ENCODE measurements at regions of chr2 and their contacts with region 1.

Region 1: GRCh38 chr2:234451852-234452625 is 44.8 kb downstream of the ARL4C start:
- DNase-seq: no peak
- H3K4me3 Mint-ChIP-seq: peak overlapping the region; percentile 85
- H3K27ac Mint-ChIP-seq: peak overlapping the region; percentile 93
- H3K4me1 Mint-ChIP-seq: peaks cover 84% of the 10 kb centered on the region
- H3K27me3 Mint-ChIP-seq: peaks cover 2% of the 10 kb centered on the region

Region 2: DNA sequence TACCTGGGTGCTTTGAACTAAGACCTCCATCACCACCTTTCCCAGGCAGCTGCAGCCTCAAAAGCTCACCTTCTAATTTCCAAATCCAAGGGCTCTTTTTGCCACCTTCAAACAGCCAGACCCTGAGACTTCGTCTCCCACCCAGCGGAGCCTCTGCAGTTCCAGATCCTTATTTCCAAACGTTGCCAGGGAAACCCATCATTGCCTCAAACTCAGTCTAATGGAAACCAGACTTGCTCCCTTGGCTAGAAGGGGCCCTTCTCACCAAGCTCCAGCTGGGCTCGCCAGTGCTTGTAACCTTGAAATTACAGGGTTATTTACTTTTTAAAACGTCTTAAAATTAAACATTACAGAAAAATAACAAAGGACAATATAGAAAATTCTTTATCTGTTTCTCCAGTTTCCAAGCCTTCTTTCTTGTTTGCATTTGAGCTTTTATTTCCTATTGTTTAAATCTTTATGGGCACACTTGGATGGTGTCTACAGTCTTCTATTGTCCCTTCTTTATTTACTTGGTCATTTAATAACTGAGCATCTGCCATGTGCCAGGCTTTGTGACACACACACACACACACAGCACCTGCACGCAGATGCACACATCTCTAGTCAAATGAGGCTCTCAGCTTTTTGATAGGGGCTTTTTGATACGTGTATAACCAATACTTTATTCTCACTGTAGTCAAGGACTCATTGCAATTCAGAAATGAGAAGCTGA is 498.8 kb before region 1 on chr2:
- CTCF ChIA-PET with region 1: no interaction called
- POLR2A ChIA-PET with region 1: no interaction called
- DNase-seq: no peak
- H3K4me3 Mint-ChIP-seq: no peak overlapping the region
- H3K27ac Mint-ChIP-seq: no peak overlapping the region
- H3K4me1 Mint-ChIP-seq: no peaks in the 10 kb centered on the region
- H3K27me3 Mint-ChIP-seq: peaks cover 35% of the 10 kb centered on the region

Region 3: DNA sequence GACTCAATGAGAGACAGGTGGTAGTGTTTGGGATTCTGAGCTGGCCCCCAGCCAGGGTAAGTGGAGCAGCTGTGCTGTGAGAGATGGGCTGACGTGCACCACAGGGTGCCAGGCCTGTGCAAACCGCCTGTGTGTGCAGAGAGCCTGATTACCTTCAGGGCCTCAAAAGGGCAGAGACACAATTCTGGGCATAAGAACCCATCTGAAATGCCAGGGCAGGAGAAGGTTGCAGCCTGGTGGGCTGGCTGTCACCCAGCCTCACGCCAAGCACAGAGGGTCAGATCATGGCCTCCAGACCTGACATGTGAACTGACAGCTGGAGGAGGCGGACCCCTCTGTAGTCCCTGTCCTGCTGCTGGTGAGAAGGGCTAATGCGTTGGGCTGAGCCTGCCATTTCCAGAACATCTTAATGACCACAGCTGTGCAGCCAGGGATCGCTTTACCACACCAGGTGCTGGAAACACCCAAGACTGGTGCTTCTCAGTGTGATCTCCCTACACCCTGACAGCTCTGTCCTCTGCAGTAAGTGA is 56.1 kb before region 1 on chr2:
- CTCF ChIA-PET with region 1: no interaction called
- POLR2A ChIA-PET with region 1: no interaction called
- DNase-seq: no peak
- H3K4me3 Mint-ChIP-seq: no peak overlapping the region
- H3K27ac Mint-ChIP-seq: no peak overlapping the region
- H3K4me1 Mint-ChIP-seq: peaks cover 78% of the 10 kb centered on the region
- H3K27me3 Mint-ChIP-seq: no peaks in the 10 kb centered on the region

Region 4: GRCh38 chr2:234425619-234426603 is 26.1 kb before region 1 on chr2:
- CTCF ChIA-PET with region 1: interaction called, 5 read pairs
- POLR2A ChIA-PET with region 1: interaction called, 10 read pairs
- DNase-seq: peak; percentile 92
- H3K4me3 Mint-ChIP-seq: peak overlapping the region; percentile 58
- H3K27ac Mint-ChIP-seq: peak overlapping the region; percentile 99
- H3K4me1 Mint-ChIP-seq: peaks cover 98% of the 10 kb centered on the region
- H3K27me3 Mint-ChIP-seq: no peaks in the 10 kb centered on the region

Region 5: GRCh38 chr2:234463626-234464290 is 11.7 kb after region 1 on chr2:
- CTCF ChIA-PET with region 1: interaction called, 49 read pairs
- POLR2A ChIA-PET with region 1: interaction called, 4 read pairs
- DNase-seq: peak; percentile 83
- H3K4me3 Mint-ChIP-seq: peak overlapping the region; percentile 66
- H3K27ac Mint-ChIP-seq: peak overlapping the region; percentile 95
- H3K4me1 Mint-ChIP-seq: peaks cover 66% of the 10 kb centered on the region
- H3K27me3 Mint-ChIP-seq: no peaks in the 10 kb centered on the region

Region 6: GRCh38 chr2:234483568-234484251 is 31.7 kb after region 1 on chr2:
- CTCF ChIA-PET with region 1: interaction called, 8 read pairs
- POLR2A ChIA-PET with region 1: interaction called, 23 read pairs
- DNase-seq: peak; percentile 90
- H3K4me3 Mint-ChIP-seq: peak overlapping the region; percentile 52
- H3K27ac Mint-ChIP-seq: peak overlapping the region; percentile 89
- H3K4me1 Mint-ChIP-seq: peaks cover 93% of the 10 kb centered on the region
- H3K27me3 Mint-ChIP-seq: no peaks in the 10 kb centered on the region

Region 7: DNA sequence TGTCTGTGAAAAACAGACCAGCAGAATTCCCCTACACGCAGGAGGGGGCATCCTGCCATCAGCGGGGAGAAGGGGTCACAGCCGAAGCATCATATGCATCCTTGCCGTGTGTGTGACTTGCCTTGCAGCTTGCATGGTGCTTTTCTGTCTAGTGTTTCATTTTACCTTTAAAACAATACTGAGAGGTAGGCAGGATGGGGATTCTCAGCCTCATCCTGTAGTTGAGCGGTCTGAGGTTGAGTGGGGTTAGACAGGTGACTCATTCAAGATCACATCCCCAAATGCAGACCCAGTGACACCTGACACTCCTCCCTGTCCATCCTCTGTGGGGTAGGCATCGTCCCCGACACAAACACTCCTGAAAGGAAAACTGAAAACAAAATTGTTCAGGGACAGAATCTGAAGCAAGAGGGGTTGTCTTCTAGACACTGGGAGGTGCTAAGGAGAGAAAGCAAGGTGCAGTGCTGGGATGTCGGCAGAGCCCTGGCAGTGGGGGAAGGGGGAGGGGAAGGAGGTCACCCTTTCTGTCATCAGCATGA is 36.9 kb after region 1 on chr2:
- CTCF ChIA-PET with region 1: interaction called, 4 read pairs
- POLR2A ChIA-PET with region 1: interaction called, 23 read pairs
- DNase-seq: peak; percentile 90
- H3K4me3 Mint-ChIP-seq: peak overlapping the region; percentile 97
- H3K27ac Mint-ChIP-seq: peak overlapping the region; percentile 98
- H3K4me1 Mint-ChIP-seq: peaks cover 71% of the 10 kb centered on the region
- H3K27me3 Mint-ChIP-seq: no peaks in the 10 kb centered on the region

Region 8: DNA sequence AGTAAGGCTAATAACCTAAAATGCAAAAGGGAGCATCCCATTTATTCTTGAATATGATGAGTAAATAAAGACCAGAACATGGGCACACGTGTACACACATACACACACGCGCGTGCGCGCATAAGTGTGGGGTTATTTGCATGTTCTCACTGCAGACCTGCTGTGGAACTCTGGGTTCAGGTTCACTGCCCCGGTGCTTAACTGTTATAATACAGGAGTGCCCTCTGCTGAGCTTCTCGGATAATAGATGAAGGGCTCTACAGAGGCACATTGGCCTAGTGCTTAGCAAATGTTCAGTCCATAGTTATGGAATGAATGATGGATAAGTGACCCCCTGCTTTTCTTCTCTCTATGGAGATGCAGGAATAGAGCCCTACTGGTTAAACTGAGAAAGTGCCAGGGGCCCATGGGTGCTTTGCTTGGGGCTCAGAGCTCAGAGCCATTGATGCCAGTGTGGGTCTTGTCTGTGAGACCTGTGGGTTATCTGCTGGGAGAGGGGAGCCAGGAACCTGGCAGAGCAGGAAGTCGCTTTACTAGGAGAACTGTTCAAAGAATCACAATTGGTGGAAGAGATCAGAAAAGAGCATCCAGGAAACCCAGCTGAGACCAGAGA is 48.5 kb after region 1 on chr2:
- CTCF ChIA-PET with region 1: interaction called, 4 read pairs
- POLR2A ChIA-PET with region 1: interaction called, 50 read pairs
- DNase-seq: peak; percentile 85
- H3K4me3 Mint-ChIP-seq: peak overlapping the region; percentile 25
- H3K27ac Mint-ChIP-seq: peak overlapping the region; percentile 60
- H3K4me1 Mint-ChIP-seq: peaks cover 32% of the 10 kb centered on the region
- H3K27me3 Mint-ChIP-seq: peaks cover 10% of the 10 kb centered on the region

Region 9: GRCh38 chr2:234550511-234551107 is 98.6 kb after region 1 on chr2:
- CTCF ChIA-PET with region 1: no interaction called
- POLR2A ChIA-PET with region 1: no interaction called
- DNase-seq: peak; percentile 69
- H3K4me3 Mint-ChIP-seq: no peak overlapping the region
- H3K27ac Mint-ChIP-seq: no peak overlapping the region
- H3K4me1 Mint-ChIP-seq: peaks cover 4% of the 10 kb centered on the region
- H3K27me3 Mint-ChIP-seq: peaks cover 20% of the 10 kb centered on the region